Panc1 (cell line): ENCODE measurements at regions of chr2 and their contacts with region 1.

Region 1: DNA sequence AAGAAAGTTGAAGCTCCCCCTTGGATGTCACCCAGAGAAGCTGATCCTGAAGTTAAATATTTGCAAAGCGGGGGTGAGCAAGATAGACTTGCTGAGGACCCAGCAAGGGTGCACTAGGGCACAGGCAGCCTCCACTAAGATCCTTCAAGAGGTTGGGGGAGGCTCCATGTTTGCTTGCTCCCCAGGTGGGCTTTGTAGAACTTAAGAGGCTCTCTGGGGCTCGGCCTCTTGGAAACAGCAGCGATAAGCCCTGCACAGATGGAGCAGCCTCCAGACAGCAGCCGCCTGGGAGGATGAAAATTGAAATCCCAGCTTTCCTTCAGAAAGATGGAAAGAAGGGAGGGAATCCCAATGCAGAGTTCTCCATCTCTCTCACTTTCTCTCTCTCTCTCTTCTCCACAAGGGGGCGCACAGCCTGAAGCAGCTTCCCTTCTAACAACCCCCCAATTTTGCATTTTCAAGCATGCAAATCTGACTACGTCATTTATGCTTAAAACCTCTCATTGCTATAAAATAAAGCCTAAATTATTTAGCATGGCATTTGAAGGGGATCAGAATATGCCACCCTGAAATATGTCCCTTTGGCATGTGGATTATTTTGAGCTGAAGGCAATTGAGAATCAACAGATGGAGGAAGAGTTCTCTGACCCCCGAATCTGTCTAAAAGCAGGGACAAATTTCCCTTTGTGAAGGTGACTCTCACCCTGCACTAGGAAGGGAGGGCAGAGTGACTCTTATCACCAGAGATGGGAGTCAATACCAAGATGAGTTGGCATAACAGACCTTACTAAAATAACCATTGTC is 185.7 kb upstream of the KLHL29 start:
- DNase-seq: peak; percentile 7
- ATAC-seq: no peak
- H3K4me3 ChIP-seq: no peak overlapping the region
- H3K27ac ChIP-seq: no peak overlapping the region
- H3K4me1 ChIP-seq: no peaks in the 10 kb centered on the region
- H3K27me3 ChIP-seq: peaks cover 6% of the 10 kb centered on the region
- CTCF ChIP-seq: peak; percentile 84

Region 2: GRCh38 chr2:23351388-23352141 is 152.2 kb after region 1 on chr2:
- CTCF ChIA-PET with region 1: no interaction called
- POLR2A ChIA-PET with region 1: no interaction called
- in situ Hi-C with region 1: no loop called
- intact Hi-C with region 1: loop called (anchors 10 kb)
- DNase-seq: no peak
- ATAC-seq: peak; percentile 99
- H3K4me3 ChIP-seq: peak overlapping the region in 1 of 2 experiments; percentile 19; a peak in 1 of 4 replicates
- H3K27ac ChIP-seq: no peak overlapping the region
- H3K4me1 ChIP-seq: peaks cover 3% of the 10 kb centered on the region; the same call in 1 of the 2 replicates
- H3K27me3 ChIP-seq: no peaks in the 10 kb centered on the region; the same call in 1 of the 2 replicates
- CTCF ChIP-seq: peak; percentile 95